ENCODE measurements at regions of chr11 and their contacts with region 1.

Region 1: GRCh38 chr11:113896156-113896879 is 8.3 kb upstream of the HTR3B start:
- DNase-seq: peak in 2 of 5 donors; percentile 11 to 18
- H3K4me3 ChIP-seq: no peak overlapping the region
- H3K4me3 Mint-ChIP-seq: peak overlapping the region in 1 of 7 donors; percentile 27
- H3K27ac ChIP-seq: no peak overlapping the region
- H3K27ac Mint-ChIP-seq: no peak overlapping the region
- H3K4me1 ChIP-seq: no peaks in the 10 kb centered on the region
- H3K4me1 Mint-ChIP-seq: peaks cover 2 to 5% (median 4%) of the 10 kb centered on the region in 3 donors
- H3K27me3 ChIP-seq: no peaks in the 10 kb centered on the region
- H3K27me3 Mint-ChIP-seq: peaks cover 0 to 2% of the 10 kb centered on the region in 2 donors

Region 2: GRCh38 chr11:113884361-113884836 is 11.9 kb before region 1 on chr11:
- CTCF ChIA-PET with region 1: interaction called, 11 read pairs
- POLR2A ChIA-PET with region 1: no interaction called
- DNase-seq: no peak
- H3K4me3 ChIP-seq: no peak overlapping the region
- H3K4me3 Mint-ChIP-seq: no peak overlapping the region
- H3K27ac ChIP-seq: no peak overlapping the region
- H3K27ac Mint-ChIP-seq: no peak overlapping the region
- H3K4me1 ChIP-seq: no peaks in the 10 kb centered on the region
- H3K4me1 Mint-ChIP-seq: no peaks in the 10 kb centered on the region
- H3K27me3 ChIP-seq: no peaks in the 10 kb centered on the region
- H3K27me3 Mint-ChIP-seq: no peaks in the 10 kb centered on the region

Region 3: DNA sequence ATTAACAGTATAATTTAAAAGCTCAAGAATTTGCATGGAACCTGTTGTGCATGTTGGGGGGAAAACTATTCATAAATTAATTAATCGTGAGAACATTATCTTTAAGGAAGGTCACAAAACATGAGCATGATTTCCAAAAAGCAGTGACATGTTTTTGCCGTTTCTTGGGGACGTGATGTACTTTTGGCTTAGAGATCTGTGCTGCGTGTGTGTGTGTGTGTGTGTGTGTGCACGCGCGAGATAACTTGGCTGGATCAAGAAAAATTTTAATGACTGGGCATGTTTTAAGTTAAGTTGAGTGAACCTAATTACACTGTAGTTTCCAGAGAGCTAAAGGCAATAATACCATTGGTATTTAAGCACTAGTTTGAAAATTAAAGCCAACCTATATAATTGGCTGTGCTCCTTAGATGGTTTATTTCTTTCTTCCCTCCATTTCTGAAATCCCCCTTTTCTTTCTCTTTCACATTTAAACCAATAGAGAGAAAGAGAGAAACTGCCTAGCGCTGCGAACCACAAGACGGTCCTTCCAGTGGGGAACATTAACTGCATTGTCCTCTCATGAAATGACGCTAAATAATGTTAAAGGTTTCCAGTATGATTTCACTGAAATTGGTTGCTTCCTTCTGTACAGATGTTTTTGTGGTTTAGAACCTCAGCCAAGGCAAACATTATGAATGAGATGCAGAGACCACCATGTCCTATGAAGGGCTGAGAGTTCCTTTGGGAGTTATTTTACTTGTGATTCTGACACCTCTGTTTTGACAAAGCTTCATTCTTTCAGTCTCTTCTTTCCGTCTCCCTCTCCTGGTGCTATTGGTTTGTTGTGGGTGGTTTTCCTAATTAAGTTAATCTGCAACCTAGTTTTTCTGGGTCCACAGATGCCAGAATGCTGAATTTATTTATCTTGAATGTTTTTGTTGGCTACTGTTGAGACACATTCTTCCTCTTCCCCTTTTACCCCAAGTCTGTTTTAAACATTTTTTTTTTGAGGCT is 214.9 kb after region 1 on chr11:
- CTCF ChIA-PET with region 1: no interaction called
- POLR2A ChIA-PET with region 1: no interaction called
- DNase-seq: no peak
- H3K4me3 ChIP-seq: no peak overlapping the region
- H3K4me3 Mint-ChIP-seq: peak overlapping the region in 6 of 7 donors; percentile 20 to 84 (median 60)
- H3K27ac ChIP-seq: no peak overlapping the region
- H3K27ac Mint-ChIP-seq: peak overlapping the region in 6 of 8 donors; percentile 64 to 91 (median 82)
- H3K4me1 ChIP-seq: no peaks in the 10 kb centered on the region
- H3K4me1 Mint-ChIP-seq: peaks cover 20 to 53% (median 37%) of the 10 kb centered on the region in 3 donors
- H3K27me3 ChIP-seq: peaks cover 3% of the 10 kb centered on the region
- H3K27me3 Mint-ChIP-seq: peaks cover 11 to 39% of the 10 kb centered on the region in 2 donors